ENCODE measurements at regions of chr6 and their contacts with region 1.

Region 1: GRCh38 chr6:153436351-153436750 is 305.3 kb upstream of the RGS17 start:
- DNase-seq: no peak
- ATAC-seq: no peak
- H3K4me3 Mint-ChIP-seq: no peak overlapping the region
- H3K27ac Mint-ChIP-seq: no peak overlapping the region
- H3K4me1 Mint-ChIP-seq: no peaks in the 10 kb centered on the region
- H3K27me3 Mint-ChIP-seq: no peaks in the 10 kb centered on the region
- CTCF ChIP-seq: no peak

Region 2: GRCh38 chr6:153412519-153412918 is 23.8 kb before region 1 on chr6:
- CTCF ChIA-PET with region 1: no interaction called
- POLR2A ChIA-PET with region 1: no interaction called
- intact Hi-C with region 1: loop called (anchors 2 kb)
- DNase-seq: no peak
- ATAC-seq: no peak
- H3K4me3 Mint-ChIP-seq: no peak overlapping the region
- H3K27ac Mint-ChIP-seq: no peak overlapping the region
- H3K4me1 Mint-ChIP-seq: no peaks in the 10 kb centered on the region
- H3K27me3 Mint-ChIP-seq: no peaks in the 10 kb centered on the region
- CTCF ChIP-seq: no peak

Region 3: DNA sequence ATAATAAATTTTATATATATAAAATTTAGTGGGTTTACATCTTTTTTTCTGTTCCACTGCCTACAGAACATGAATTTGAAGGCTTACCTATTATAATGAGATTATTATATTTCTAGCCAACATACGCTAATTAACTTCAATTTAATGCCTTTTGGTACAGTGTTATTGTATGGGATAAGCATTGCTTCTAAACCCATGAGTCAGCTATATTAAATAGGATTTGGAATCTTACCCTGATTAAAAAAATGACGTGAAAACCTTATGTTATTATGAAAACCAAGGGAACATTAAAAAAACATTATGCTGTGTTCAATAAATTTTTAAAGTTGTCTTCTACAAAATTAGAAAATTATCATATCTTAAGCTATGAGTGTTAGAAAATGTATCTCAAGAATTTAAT is 28.7 kb after region 1 on chr6:
- CTCF ChIA-PET with region 1: no interaction called
- POLR2A ChIA-PET with region 1: no interaction called
- intact Hi-C with region 1: no loop called
- DNase-seq: no peak
- ATAC-seq: no peak
- H3K4me3 Mint-ChIP-seq: no peak overlapping the region
- H3K27ac Mint-ChIP-seq: no peak overlapping the region
- H3K4me1 Mint-ChIP-seq: no peaks in the 10 kb centered on the region
- H3K27me3 Mint-ChIP-seq: no peaks in the 10 kb centered on the region
- CTCF ChIP-seq: no peak

Region 4: DNA sequence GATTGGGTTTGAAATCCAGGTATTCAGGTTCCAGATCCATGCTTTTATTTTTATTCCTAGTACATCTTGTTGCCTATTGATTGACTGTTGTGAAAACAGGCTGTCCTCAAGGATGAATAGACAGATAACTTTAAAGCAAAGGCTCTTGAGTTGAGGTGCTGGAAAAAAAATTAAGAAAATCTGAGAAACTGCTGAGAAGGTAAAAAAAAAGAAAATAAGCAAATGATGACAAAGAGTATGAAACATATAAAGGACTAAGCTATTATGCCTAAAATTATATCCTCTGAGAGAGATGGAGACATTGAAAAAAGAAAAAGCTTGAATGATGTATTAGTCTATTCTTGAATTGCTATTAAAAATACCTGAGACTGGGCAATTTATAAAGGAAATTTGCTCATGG is 87.0 kb after region 1 on chr6:
- CTCF ChIA-PET with region 1: no interaction called
- POLR2A ChIA-PET with region 1: no interaction called
- intact Hi-C with region 1: no loop called
- DNase-seq: no peak
- ATAC-seq: no peak
- H3K4me3 Mint-ChIP-seq: no peak overlapping the region
- H3K27ac Mint-ChIP-seq: no peak overlapping the region
- H3K4me1 Mint-ChIP-seq: no peaks in the 10 kb centered on the region
- H3K27me3 Mint-ChIP-seq: no peaks in the 10 kb centered on the region
- CTCF ChIP-seq: no peak